MCF 10A (cell line): ENCODE measurements at regions of chr12 and their contacts with region 1.

Region 1: DNA sequence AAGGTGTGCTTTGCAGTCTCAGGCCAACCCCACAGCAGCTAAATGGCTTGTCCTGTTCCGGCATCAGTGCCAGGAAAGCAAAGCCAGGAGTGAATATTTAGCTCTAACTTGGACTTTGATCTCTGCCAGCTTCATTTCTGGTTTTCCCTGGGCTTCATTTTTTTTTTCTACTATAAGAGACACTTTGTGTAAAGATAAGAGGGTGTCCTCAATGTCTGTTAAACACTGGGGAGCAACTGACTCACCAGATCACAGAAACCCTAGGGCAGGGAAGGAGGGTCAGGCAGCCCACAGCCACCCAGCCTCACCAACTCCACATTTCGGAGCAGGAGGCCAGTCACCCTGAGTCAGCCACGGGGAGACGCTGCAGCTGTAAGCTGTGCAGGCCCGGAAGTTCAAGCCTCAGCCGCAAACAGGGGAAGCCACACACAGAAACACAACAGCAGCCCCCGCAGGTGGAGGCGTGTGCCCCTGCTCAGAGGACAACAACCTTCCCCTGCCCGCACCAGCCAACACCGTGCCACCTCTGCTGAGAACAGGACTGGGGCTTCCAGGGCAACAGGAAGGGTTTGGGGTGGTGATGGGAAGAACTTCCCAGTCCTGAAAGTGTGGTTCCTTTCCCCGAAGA is 6.3 kb downstream of the TNFRSF1A start:
- DNase-seq: peak; percentile 85
- H3K4me3 Mint-ChIP-seq: no peak overlapping the region
- H3K27ac Mint-ChIP-seq: no peak overlapping the region
- H3K4me1 Mint-ChIP-seq: peaks cover 24% of the 10 kb centered on the region
- H3K27me3 Mint-ChIP-seq: no peaks in the 10 kb centered on the region
- CTCF ChIP-seq: peak; percentile 44

Region 2: DNA sequence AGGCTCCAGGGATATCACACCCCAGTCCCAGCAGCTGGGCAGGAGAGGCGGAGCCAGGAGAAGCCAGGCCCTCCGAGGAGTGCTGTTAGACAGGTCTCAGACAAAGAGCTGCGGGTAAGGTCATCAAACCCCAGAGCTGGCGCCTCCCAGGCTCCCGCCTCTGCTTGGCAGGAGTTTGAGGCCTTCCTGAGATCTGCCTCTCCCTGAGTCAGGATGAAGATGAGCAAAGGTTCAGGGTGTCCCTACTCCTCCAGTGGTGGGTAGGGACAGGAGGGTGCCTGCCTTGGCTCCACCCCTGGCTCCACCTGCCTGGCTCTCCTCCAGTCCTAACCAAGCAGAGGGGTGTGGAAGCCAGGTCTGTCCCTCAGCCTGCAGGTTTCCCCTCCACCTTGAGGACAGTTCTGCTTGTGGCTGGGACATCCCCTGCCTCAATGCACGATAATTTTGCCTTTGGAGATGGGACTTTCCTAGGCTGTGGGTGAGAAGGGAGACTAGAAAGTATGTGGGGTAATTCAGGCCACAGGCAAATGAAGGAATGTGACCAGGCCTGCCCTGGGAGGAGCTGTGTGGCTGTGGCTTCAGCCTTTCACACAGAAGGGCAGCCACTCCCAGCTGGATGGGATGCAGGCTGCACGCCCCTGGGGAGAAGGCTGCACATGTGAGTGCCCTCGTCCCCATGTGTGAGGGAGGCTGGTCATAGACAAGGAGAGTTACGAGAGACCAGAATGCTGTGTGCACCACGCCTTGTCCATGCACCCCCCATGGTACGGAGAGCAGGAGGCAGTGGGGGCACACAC is 22.8 kb before region 1 on chr12:
- CTCF ChIA-PET with region 1: interaction called, 20 read pairs
- POLR2A ChIA-PET with region 1: interaction called, 15 read pairs
- intact Hi-C with region 1: no loop called
- DNase-seq: peak; percentile 84
- H3K4me3 Mint-ChIP-seq: peak overlapping the region; percentile 24
- H3K27ac Mint-ChIP-seq: peak overlapping the region; percentile 54
- H3K4me1 Mint-ChIP-seq: peaks cover 14% of the 10 kb centered on the region
- H3K27me3 Mint-ChIP-seq: no peaks in the 10 kb centered on the region
- CTCF ChIP-seq: no peak

Region 3: DNA sequence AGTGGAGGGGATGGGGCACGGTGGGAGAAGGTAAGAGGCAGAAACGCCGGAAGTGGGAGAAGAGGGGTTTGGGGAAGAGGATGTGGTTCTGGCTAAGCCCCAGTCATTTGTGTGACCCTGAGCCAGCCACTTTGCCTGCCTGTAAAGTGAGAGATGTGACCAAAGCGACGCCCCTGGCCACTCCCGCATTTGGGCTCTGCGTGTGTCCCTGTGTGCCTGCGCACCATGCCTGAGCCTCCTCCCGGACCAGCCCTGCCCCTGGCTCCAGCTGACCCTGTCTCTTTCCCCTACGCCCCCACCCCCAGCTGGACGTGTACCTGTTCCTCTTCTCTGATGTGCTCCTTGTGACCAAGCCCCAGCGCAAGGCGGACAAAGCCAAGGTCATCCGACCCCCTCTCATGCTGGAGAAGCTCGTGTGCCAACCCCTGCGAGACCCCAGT is 17.1 kb before region 1 on chr12:
- CTCF ChIA-PET with region 1: interaction called, 20 read pairs
- POLR2A ChIA-PET with region 1: interaction called, 22 read pairs
- intact Hi-C with region 1: no loop called
- DNase-seq: no peak
- H3K4me3 Mint-ChIP-seq: no peak overlapping the region
- H3K27ac Mint-ChIP-seq: peak overlapping the region; percentile 66
- H3K4me1 Mint-ChIP-seq: peaks cover 13% of the 10 kb centered on the region
- H3K27me3 Mint-ChIP-seq: no peaks in the 10 kb centered on the region
- CTCF ChIP-seq: no peak

Region 4: GRCh38 chr12:6367065-6367968 is 31.8 kb after region 1 on chr12:
- CTCF ChIA-PET with region 1: interaction called, 27 read pairs
- POLR2A ChIA-PET with region 1: interaction called, 739 read pairs
- intact Hi-C with region 1: loop called (anchors 1 kb)
- DNase-seq: no peak
- H3K4me3 Mint-ChIP-seq: no peak overlapping the region
- H3K27ac Mint-ChIP-seq: no peak overlapping the region
- H3K4me1 Mint-ChIP-seq: peaks cover 43% of the 10 kb centered on the region
- H3K27me3 Mint-ChIP-seq: no peaks in the 10 kb centered on the region
- CTCF ChIP-seq: no peak

Region 5: GRCh38 chr12:6376079-6376869 is 40.7 kb after region 1 on chr12:
- CTCF ChIA-PET with region 1: interaction called, 27 read pairs
- POLR2A ChIA-PET with region 1: interaction called, 739 read pairs
- intact Hi-C with region 1: loop called (anchors 1 kb)
- DNase-seq: peak; percentile 97
- H3K4me3 Mint-ChIP-seq: peak overlapping the region; percentile 89
- H3K27ac Mint-ChIP-seq: peak overlapping the region; percentile 97
- H3K4me1 Mint-ChIP-seq: peaks cover 56% of the 10 kb centered on the region
- H3K27me3 Mint-ChIP-seq: no peaks in the 10 kb centered on the region
- CTCF ChIP-seq: no peak

Region 6: DNA sequence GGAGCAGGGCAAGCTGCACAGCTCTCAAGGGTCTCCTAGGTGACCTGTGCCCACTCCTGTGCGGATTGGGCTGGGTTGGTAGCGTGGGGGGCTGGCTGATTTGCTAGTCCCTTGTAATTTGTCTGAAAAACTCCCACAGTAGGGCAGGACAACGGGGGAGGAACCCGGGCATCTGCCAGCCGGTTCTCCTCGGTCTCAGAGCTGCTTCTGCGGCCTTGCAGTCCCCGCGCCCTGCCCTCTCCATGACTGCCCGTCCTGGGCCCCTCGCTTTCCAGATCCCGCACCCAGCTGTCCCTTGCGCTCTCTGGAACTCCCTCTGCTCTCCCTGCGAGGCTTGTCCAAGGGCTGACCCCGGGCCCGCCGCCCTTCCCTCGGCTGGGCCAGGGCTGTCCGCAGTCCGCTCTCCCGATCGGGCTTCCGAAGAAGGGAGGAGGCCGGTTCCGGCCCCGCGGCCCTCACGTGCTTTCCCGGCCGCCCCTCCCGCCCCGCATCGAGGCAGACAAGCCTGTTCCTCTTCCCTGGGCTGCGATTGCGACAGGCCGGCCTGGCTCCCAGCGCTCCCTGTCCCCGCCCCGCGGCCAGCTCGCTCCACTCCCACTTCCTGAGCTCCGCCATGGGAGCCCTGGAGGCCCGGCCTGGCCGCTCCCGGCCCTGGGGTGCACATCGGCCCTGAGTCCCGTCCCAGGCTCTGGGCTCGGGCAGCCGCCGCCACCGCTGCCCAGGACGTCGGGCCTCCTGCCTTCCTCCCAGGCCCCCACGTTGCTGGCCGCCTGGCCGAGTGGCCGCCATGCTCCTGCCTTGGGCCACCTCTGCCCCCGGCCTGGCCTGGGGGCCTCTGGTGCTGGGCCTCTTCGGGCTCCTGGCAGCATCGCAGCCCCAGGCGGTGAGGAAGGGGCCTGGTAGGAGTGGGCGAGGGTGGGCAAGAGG is 48.3 kb after region 1 on chr12 and contains the start of gene LTBR:
- CTCF ChIA-PET with region 1: interaction called, 8 read pairs
- POLR2A ChIA-PET with region 1: interaction called, 739 read pairs
- intact Hi-C with region 1: loop called (anchors 2 kb)
- DNase-seq: peak; percentile 96
- H3K4me3 Mint-ChIP-seq: peak within 1 kb of the TSS; percentile 94
- H3K27ac Mint-ChIP-seq: peak within 1 kb of the TSS; percentile 96
- H3K4me1 Mint-ChIP-seq: peaks cover 35% of the 10 kb centered on the region
- H3K27me3 Mint-ChIP-seq: no peaks in the 10 kb centered on the region
- CTCF ChIP-seq: no peak
- total RNA-seq, gene LTBR: 158 and 169 TPM in 2 replicates

Region 7: DNA sequence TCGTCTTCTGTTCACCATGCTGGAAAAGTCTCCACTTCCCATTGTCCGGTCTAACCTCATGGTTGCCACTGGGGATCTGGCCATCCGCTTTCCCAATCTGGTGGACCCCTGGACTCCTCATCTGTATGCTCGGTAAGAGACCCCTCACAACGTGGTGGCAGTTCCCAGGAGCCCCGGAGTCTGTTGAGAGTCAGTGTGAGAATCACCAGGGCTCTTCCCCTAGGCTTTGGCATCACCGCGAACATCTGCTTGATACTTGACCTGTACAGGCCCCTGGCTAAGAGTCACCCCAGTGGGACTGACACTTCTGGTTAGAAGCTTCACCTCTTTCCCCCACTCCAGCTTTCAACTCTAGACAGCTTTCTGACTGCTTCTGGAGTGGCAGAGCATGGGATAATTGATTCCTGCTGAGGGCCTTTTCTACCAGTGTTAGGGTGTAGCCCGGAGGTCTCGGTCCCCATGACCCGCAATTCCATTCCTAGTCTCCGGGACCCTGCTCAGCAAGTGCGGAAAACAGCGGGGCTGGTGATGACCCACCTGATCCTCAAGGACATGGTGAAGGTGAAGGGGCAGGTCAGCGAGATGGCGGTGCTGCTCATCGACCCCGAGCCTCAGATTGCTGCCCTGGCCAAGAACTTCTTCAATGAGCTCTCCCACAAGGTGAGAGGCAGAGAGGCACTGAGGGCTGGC is 192.8 kb after region 1 on chr12:
- CTCF ChIA-PET with region 1: no interaction called
- POLR2A ChIA-PET with region 1: no interaction called
- intact Hi-C with region 1: no loop called
- DNase-seq: no peak
- H3K4me3 Mint-ChIP-seq: no peak overlapping the region
- H3K27ac Mint-ChIP-seq: no peak overlapping the region
- H3K4me1 Mint-ChIP-seq: peaks cover 12% of the 10 kb centered on the region
- H3K27me3 Mint-ChIP-seq: no peaks in the 10 kb centered on the region
- CTCF ChIP-seq: no peak

Region 8: GRCh38 chr12:6546016-6546415 is 210.5 kb after region 1 on chr12:
- CTCF ChIA-PET with region 1: no interaction called
- POLR2A ChIA-PET with region 1: no interaction called
- intact Hi-C with region 1: no loop called
- DNase-seq: no peak
- H3K4me3 Mint-ChIP-seq: no peak overlapping the region
- H3K27ac Mint-ChIP-seq: no peak overlapping the region
- H3K4me1 Mint-ChIP-seq: peaks cover 15% of the 10 kb centered on the region
- H3K27me3 Mint-ChIP-seq: no peaks in the 10 kb centered on the region
- CTCF ChIP-seq: no peak

Region 9: GRCh38 chr12:6556857-6557256 is 221.3 kb after region 1 on chr12:
- CTCF ChIA-PET with region 1: no interaction called
- POLR2A ChIA-PET with region 1: no interaction called
- intact Hi-C with region 1: no loop called
- DNase-seq: no peak
- H3K4me3 Mint-ChIP-seq: no peak overlapping the region
- H3K27ac Mint-ChIP-seq: no peak overlapping the region
- H3K4me1 Mint-ChIP-seq: peaks cover 27% of the 10 kb centered on the region
- H3K27me3 Mint-ChIP-seq: no peaks in the 10 kb centered on the region
- CTCF ChIP-seq: no peak

Region 10: DNA sequence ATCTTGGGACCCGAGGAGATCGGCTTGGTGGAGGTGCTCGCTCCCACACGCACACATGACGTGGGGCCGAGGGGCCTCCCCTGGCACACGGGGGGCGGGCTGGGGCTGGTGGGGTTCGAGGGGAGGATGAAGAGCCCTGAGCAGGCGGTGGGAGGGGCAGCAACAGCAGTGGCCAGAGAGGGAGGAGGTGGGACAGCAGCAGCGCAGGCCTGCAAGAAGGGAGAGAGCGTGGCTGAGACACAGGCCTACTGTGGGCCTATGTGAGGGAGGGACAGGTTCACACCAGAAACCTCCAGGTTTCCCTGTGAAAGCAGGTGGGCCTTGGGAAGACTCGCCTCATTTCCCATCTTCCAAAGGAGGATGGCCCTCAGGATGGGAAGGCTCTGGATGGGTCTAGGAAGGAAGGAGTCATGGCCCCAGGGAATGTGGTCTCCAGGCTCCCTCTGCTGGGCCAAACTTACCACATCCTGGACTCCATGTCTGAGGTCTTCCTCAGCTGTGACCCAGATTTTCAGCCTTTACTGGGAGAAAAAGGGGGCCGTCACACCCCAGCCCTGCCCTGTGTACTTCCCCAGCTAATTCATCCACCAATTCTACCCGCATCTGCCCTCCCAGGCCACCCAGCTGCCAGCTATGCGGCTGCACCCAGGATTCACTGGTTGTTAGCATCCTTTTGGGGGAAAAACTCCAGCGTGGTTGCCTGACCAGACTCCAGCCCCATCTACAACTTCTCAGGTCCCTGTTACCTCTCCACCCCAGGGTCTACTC is 362.2 kb after region 1 on chr12:
- CTCF ChIA-PET with region 1: no interaction called
- POLR2A ChIA-PET with region 1: no interaction called
- intact Hi-C with region 1: no loop called
- DNase-seq: peak; percentile 73
- H3K4me3 Mint-ChIP-seq: no peak overlapping the region
- H3K27ac Mint-ChIP-seq: no peak overlapping the region
- H3K4me1 Mint-ChIP-seq: peaks cover 8% of the 10 kb centered on the region
- H3K27me3 Mint-ChIP-seq: peaks cover 60% of the 10 kb centered on the region
- CTCF ChIP-seq: peak; percentile 66